ENCODE measurements at regions of chr17 and their contacts with region 1.

Region 1: DNA sequence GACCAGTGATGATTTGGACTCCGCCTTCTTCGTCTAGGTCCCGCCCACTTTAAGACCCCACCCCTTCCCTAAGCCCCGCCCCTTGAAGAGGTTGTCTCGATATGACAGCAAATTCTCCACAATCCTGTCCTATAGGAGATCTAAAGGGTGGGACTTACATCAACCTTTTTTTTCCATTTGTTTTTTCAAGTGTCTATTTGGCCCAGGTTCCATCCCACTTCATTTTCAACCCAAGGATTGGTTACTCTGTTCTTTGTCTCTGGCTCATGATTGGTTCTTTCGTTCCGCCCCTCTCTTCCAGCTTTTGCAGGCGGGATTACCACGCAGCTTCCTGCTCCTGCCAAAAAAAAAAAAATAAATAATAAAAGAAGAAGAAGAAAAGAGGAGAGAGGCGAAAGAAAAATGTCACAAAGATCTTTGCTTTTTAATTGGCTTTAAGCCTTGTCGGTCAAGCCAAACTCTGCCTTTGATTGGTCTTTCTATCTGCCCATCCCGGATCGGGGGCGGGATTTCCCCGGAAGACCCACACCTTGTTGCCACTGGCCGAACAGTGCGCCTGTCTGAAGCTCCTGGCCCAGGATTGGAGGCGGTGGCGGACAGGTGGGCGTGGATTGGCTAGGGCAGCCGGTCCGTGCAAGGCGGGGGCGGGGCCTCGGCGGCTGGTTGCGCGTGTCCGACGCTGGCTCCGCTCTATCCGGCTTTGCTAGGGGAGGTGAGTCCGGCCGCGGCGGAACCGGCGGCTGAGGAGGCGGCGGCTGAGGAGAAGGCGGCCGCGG is 1.2 kb upstream of the NLK start:
- H3K4me3 ChIP-seq: peak overlapping the region; percentile 81
- H3K27ac ChIP-seq: no peak overlapping the region
- H3K4me1 ChIP-seq: peaks cover 9% of the 10 kb centered on the region; the same call in 1 of the 2 replicates
- CTCF ChIP-seq: no peak

Region 2: DNA sequence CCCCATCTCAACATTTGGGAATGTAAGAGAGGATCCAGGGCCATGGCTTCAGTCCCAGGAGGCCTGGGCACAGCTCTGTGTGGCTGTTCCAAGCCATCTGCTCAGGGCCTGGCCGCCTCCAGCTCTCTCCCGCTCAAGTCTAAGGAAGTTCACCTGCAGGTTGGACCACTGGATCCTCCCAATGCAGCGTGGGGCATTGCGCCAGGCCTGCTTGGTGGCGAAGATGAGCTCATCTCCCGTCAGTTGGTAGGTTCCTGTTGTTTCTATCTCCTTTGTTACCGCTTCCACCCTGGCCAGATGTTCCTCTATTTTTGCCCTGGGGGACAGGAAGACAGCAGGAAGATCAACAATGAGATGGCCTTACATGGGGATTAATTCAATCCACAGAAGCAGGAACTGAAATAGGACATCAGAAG is 258.5 kb before region 1 on chr17:
- CTCF ChIA-PET with region 1: no interaction called
- POLR2A ChIA-PET with region 1: no interaction called
- H3K4me3 ChIP-seq: no peak overlapping the region
- H3K27ac ChIP-seq: no peak overlapping the region
- H3K4me1 ChIP-seq: no peaks in the 10 kb centered on the region
- CTCF ChIP-seq: no peak

Region 3: DNA sequence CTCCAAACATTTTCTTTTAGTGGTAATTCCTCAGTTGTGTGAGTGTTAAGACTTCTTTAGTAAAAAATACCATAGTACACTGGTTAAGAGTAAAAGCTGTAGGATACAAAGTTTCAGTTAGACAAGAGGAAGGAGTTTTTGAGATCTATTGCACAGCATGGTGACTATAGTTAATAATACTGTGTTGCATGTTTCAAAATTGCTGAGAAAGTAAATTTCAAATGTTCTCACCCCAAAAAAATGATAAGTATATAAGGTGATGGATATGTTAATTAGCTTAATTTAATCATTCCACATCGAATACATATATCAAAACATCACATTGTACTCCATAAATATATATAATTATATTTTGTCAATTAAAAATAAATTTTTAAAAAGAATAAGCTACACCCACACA is 20.7 kb before region 1 on chr17:
- CTCF ChIA-PET with region 1: no interaction called
- POLR2A ChIA-PET with region 1: interaction called, 10 read pairs
- H3K4me3 ChIP-seq: no peak overlapping the region
- H3K27ac ChIP-seq: no peak overlapping the region
- H3K4me1 ChIP-seq: no peaks in the 10 kb centered on the region
- CTCF ChIP-seq: no peak

Region 4: GRCh38 chr17:28053044-28053670 is 11.9 kb after region 1 on chr17:
- CTCF ChIA-PET with region 1: interaction called, 4 read pairs
- POLR2A ChIA-PET with region 1: interaction called, 13 read pairs
- H3K4me3 ChIP-seq: no peak overlapping the region
- H3K27ac ChIP-seq: no peak overlapping the region
- H3K4me1 ChIP-seq: peaks cover 23% of the 10 kb centered on the region
- CTCF ChIP-seq: no peak

Region 5: DNA sequence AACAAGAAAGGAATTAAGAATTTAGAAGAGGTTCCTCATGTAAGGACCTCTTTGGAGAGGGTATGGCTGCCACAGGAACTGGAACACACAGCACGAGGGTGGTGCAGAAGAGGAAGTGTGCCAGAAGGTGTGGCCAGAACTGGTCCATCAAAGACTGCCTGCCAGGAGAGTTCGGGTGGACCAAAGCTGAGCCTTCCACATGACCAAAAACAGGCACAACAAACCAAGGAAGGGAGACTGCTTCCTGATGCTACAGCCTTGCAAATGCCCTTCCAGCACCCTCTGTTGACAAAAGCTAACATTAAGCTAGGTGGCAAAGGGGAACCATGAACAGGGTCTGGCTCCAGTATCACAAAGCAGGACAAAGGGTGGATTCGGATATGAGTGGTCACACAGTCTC is 152.0 kb after region 1 on chr17:
- CTCF ChIA-PET with region 1: no interaction called
- POLR2A ChIA-PET with region 1: no interaction called
- H3K4me3 ChIP-seq: no peak overlapping the region
- H3K27ac ChIP-seq: no peak overlapping the region
- H3K4me1 ChIP-seq: peaks cover 15% of the 10 kb centered on the region; the same call in 1 of the 2 replicates
- CTCF ChIP-seq: no peak